OCI-LY7 (cell line): ENCODE measurements at regions of chr1 and their contacts with region 1.

Region 1: GRCh38 chr1:97893844-97894243 is 27.0 kb downstream of the DPYD start:
- DNase-seq: no peak
- H3K4me3 ChIP-seq: no peak overlapping the region
- H3K27ac ChIP-seq: no peak overlapping the region
- H3K4me1 ChIP-seq: no peaks in the 10 kb centered on the region
- CTCF ChIP-seq: no peak

Region 2: GRCh38 chr1:96698342-96698983 is 1195.4 kb before region 1 on chr1:
- CTCF ChIA-PET with region 1: no interaction called
- POLR2A ChIA-PET with region 1: no interaction called
- intact Hi-C with region 1: no loop called
- DNase-seq: no peak
- H3K4me3 ChIP-seq: no peak overlapping the region
- H3K27ac ChIP-seq: no peak overlapping the region
- H3K4me1 ChIP-seq: no peaks in the 10 kb centered on the region
- CTCF ChIP-seq: no peak

Region 3: GRCh38 chr1:97004054-97004453 is 889.8 kb before region 1 on chr1:
- CTCF ChIA-PET with region 1: no interaction called
- POLR2A ChIA-PET with region 1: no interaction called
- intact Hi-C with region 1: loop called (anchors 5 kb)
- DNase-seq: no peak
- H3K4me3 ChIP-seq: no peak overlapping the region
- H3K27ac ChIP-seq: no peak overlapping the region
- H3K4me1 ChIP-seq: no peaks in the 10 kb centered on the region
- CTCF ChIP-seq: no peak

Region 4: GRCh38 chr1:97925151-97925550 is 31.3 kb after region 1 on chr1:
- CTCF ChIA-PET with region 1: no interaction called
- POLR2A ChIA-PET with region 1: no interaction called
- intact Hi-C with region 1: no loop called
- DNase-seq: no peak
- H3K4me3 ChIP-seq: no peak overlapping the region
- H3K27ac ChIP-seq: no peak overlapping the region
- H3K4me1 ChIP-seq: peaks cover 7% of the 10 kb centered on the region
- CTCF ChIP-seq: no peak